ENCODE measurements at regions of chr15 and their contacts with region 1.

Region 1: DNA sequence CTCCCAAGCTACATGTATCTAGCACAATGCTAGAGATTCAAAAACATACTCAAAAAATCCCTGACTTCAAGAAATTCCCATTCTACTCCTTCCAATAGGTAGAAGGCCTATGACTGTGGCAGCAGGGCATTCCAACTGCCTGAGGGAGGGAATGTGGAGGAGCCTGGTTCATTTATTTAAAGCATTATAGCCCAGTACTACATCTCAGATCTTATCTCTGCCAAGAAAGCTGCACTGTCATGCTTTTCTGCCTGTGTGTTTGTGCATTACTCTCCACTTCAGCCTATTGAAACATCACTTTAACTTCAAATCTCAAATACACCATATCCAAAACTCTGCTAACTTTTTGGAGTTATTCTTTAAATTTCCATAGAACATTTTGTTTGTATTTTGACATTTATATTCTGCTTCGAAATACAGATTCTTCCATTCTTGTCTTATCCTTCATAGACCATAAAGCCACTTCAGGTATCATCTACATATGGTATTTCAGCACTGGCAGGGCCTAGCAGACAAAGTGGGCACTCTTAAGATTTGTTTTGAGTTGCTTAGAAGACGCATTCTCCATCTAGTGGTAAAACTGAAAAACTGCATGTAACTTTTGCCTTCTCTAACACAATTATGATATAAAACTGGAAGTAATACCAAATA is 59.1 kb upstream of the NEDD4 start:
- DNase-seq: no peak
- H3K4me3 ChIP-seq: no peak overlapping the region
- H3K27ac ChIP-seq: no peak overlapping the region
- H3K4me1 ChIP-seq: peaks cover 0 to 5% (median 2%) of the 10 kb centered on the region in 4 donors
- H3K27me3 ChIP-seq: no peaks in the 10 kb centered on the region
- CTCF ChIP-seq: peak; percentile 76 to 85 (median 81)
- EP300 ChIP-seq: no peak
- POLR2A ChIP-seq: no peak

Region 2: DNA sequence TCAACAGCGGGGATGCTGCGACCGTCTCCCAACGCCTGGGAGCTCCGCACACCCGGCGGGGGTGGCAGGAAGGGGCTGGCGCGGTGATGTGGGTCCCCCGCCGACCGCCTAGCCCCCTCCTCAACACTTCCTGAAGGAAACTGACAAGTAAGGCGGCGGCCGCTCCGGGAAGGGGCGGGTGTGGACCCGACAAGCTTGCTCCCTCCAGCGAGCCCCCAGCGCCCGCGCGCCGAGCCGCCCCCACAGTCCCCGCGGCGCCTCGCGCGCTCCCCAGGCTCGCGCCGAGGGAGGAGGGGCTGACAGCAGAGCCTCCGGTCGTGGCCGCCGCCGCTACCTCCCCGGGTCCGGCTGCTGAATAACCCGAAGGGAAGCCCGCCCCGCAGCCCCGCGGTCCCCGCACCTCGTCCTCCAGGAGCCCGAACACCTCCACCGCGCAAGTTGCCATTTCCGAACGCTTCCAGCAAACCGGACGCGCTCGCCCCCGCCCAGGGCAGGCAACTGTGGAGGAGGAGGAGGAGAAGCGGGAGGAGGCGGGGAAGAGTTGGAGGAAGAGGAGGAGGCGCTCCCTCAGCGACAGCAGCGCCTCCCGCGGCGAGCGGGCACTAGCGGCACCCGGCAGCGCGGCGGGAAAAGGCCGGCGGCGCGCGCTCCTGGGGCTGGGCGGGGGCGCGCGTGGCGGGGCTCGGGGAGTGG is 59.3 kb before region 1 on chr15 and contains the start of gene NEDD4:
- intact Hi-C with region 1: loop called (anchors 5 kb)
- DNase-seq: peak; percentile 94
- H3K4me3 ChIP-seq: peak within 1 kb of the TSS; percentile 80 to 95 (median 84)
- H3K27ac ChIP-seq: peak within 1 kb of the TSS; percentile 92 to 97 (median 95)
- H3K4me1 ChIP-seq: peaks cover 3 to 34% (median 27%) of the 10 kb centered on the region in 4 donors
- H3K27me3 ChIP-seq: no peaks in the 10 kb centered on the region
- CTCF ChIP-seq: peak; percentile 39 to 71 (median 44)
- EP300 ChIP-seq: no peak
- POLR2A ChIP-seq: no peak
- total RNA-seq, gene NEDD4: 19.2 to 35.1 (median 23.1) TPM